Natural killer cell (primary cell): ENCODE measurements at regions of chr18 and their contacts with region 1.

Region 1: GRCh38 chr18:43587538-43588153 is 310.4 kb upstream of the SYT4 start:
- DNase-seq: peak in 1 of 2 donors; percentile 23
- ATAC-seq: no peak
- H3K4me3 ChIP-seq: no peak overlapping the region
- H3K4me3 Mint-ChIP-seq: no peak overlapping the region
- H3K27ac ChIP-seq: no peak overlapping the region
- H3K27ac Mint-ChIP-seq: no peak overlapping the region
- H3K4me1 ChIP-seq: no peaks in the 10 kb centered on the region
- H3K4me1 Mint-ChIP-seq: no peaks in the 10 kb centered on the region
- H3K27me3 ChIP-seq: no peaks in the 10 kb centered on the region
- H3K27me3 Mint-ChIP-seq: no peaks in the 10 kb centered on the region
- CTCF ChIP-seq: peak; percentile 67

Region 2: GRCh38 chr18:42053188-42053781 is 1534.4 kb before region 1 on chr18:
- intact Hi-C with region 1: loop called (anchors 2 kb)
- DNase-seq: peak; percentile 28 to 78
- ATAC-seq: peak; percentile 82 to 87 (median 85)
- H3K4me3 ChIP-seq: no peak overlapping the region
- H3K4me3 Mint-ChIP-seq: no peak overlapping the region
- H3K27ac ChIP-seq: no peak overlapping the region
- H3K27ac Mint-ChIP-seq: no peak overlapping the region
- H3K4me1 ChIP-seq: no peaks in the 10 kb centered on the region
- H3K4me1 Mint-ChIP-seq: peaks cover 6 to 14% of the 10 kb centered on the region in 2 donors
- H3K27me3 ChIP-seq: no peaks in the 10 kb centered on the region
- H3K27me3 Mint-ChIP-seq: no peaks in the 10 kb centered on the region
- CTCF ChIP-seq: peak; percentile 93

Region 3: GRCh38 chr18:42114310-42114943 is 1473.2 kb before region 1 on chr18:
- intact Hi-C with region 1: loop called (anchors 1 kb)
- DNase-seq: peak; percentile 21 to 72
- ATAC-seq: peak; percentile 75 to 90 (median 85)
- H3K4me3 ChIP-seq: no peak overlapping the region
- H3K4me3 Mint-ChIP-seq: no peak overlapping the region
- H3K27ac ChIP-seq: no peak overlapping the region
- H3K27ac Mint-ChIP-seq: peak overlapping the region; percentile 50 to 67
- H3K4me1 ChIP-seq: peaks cover 3% of the 10 kb centered on the region
- H3K4me1 Mint-ChIP-seq: peaks cover 15 to 25% of the 10 kb centered on the region in 2 donors
- H3K27me3 ChIP-seq: no peaks in the 10 kb centered on the region
- H3K27me3 Mint-ChIP-seq: peaks cover 7 to 13% of the 10 kb centered on the region in 2 donors
- CTCF ChIP-seq: peak; percentile 90